GM12878 (cell line): ENCODE measurements at regions of chr17 and their contacts with region 1.

Region 1: GRCh38 chr17:29116804-29117772 is 63.1 kb downstream of the MYO18A start:
- DNase-seq: peak; percentile 5
- ATAC-seq: peak; percentile 89
- H3K4me3 ChIP-seq: no peak overlapping the region
- H3K27ac ChIP-seq: no peak overlapping the region
- H3K4me1 ChIP-seq: no peaks in the 10 kb centered on the region
- H3K27me3 ChIP-seq: no peaks in the 10 kb centered on the region
- CTCF ChIP-seq: peak; percentile 90 to 95 (median 92)
- EP300 ChIP-seq: no peak
- POLR2A ChIP-seq: no peak
- RAD21 ChIP-seq: peak; percentile 70

Region 2: GRCh38 chr17:28960256-28961061 is 156.6 kb before region 1 on chr17:
- CTCF ChIA-PET with region 1: interaction called, 415 read pairs
- POLR2A ChIA-PET with region 1: interaction called, 5 read pairs
- RAD21 ChIA-PET with region 1: interaction called, 170 read pairs
- SMC1A ChIA-PET with region 1: interaction called, 68 read pairs
- in situ Hi-C with region 1: loop called (anchors 5 kb)
- intact Hi-C with region 1: loop called (anchors 1 kb)
- DNase-seq: no peak
- ATAC-seq: no peak
- H3K4me3 ChIP-seq: no peak overlapping the region
- H3K27ac ChIP-seq: no peak overlapping the region
- H3K4me1 ChIP-seq: no peaks in the 10 kb centered on the region
- H3K27me3 ChIP-seq: peaks cover 0 to 2% of the 10 kb centered on the region in 2 experiments; a peak in 1 of 4 replicates
- CTCF ChIP-seq: no peak
- EP300 ChIP-seq: no peak
- POLR2A ChIP-seq: no peak
- RAD21 ChIP-seq: no peak

Region 3: GRCh38 chr17:28973425-28973824 is 143.7 kb before region 1 on chr17:
- CTCF ChIA-PET with region 1: interaction called, 36 read pairs
- POLR2A ChIA-PET with region 1: no interaction called
- RAD21 ChIA-PET with region 1: interaction called, 3 read pairs
- SMC1A ChIA-PET with region 1: interaction called, 5 read pairs
- in situ Hi-C with region 1: loop called (anchors 5 kb)
- intact Hi-C with region 1: no loop called
- DNase-seq: no peak
- ATAC-seq: no peak
- H3K4me3 ChIP-seq: no peak overlapping the region
- H3K27ac ChIP-seq: no peak overlapping the region
- H3K4me1 ChIP-seq: no peaks in the 10 kb centered on the region
- H3K27me3 ChIP-seq: no peaks in the 10 kb centered on the region; a peak in 1 of 4 replicates
- CTCF ChIP-seq: no peak
- EP300 ChIP-seq: no peak
- POLR2A ChIP-seq: no peak
- RAD21 ChIP-seq: no peak

Region 4: GRCh38 chr17:29102741-29103181 is 14.3 kb before region 1 on chr17:
- CTCF ChIA-PET with region 1: interaction called, 24 read pairs
- POLR2A ChIA-PET with region 1: no interaction called
- RAD21 ChIA-PET with region 1: no interaction called
- SMC1A ChIA-PET with region 1: interaction called, 3 read pairs
- in situ Hi-C with region 1: no loop called
- intact Hi-C with region 1: no loop called
- DNase-seq: no peak
- ATAC-seq: no peak
- H3K4me3 ChIP-seq: no peak overlapping the region
- H3K27ac ChIP-seq: no peak overlapping the region
- H3K4me1 ChIP-seq: no peaks in the 10 kb centered on the region
- H3K27me3 ChIP-seq: no peaks in the 10 kb centered on the region
- CTCF ChIP-seq: no peak
- EP300 ChIP-seq: no peak
- POLR2A ChIP-seq: no peak
- RAD21 ChIP-seq: no peak

Region 5: DNA sequence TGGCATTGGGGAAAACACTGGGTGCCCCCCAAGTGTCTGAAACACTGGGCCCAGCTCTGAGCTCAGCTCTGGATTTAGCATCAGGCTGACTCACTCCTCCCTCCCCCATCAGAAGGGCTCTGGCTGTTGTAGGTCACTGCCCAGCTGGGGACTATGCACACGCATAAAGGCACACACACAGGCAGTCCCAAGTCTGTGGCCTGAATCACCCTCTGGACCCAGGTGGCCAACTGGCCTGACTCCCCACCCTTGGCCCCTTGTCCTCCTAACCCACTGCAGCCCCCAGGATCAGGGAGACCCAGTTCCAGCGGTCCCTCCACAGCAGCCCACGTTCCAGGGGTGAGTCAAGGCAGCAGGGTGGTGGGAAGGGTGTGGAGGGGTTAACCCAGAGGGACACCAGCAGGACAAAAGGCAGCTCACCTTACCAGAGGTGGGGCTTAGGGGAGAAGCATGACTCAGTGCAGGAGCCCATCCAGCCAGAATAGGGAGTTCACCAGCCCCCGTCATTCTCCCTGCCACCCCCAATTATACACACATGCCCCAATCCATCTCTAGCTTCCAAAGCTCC is 16.1 kb after region 1 on chr17:
- CTCF ChIA-PET with region 1: interaction called, 371 read pairs
- POLR2A ChIA-PET with region 1: no interaction called
- RAD21 ChIA-PET with region 1: interaction called, 4 read pairs
- SMC1A ChIA-PET with region 1: interaction called, 7 read pairs
- in situ Hi-C with region 1: no loop called
- intact Hi-C with region 1: no loop called
- DNase-seq: no peak
- ATAC-seq: peak; percentile 35; the same call in 1 of the 3 replicates
- H3K4me3 ChIP-seq: no peak overlapping the region
- H3K27ac ChIP-seq: no peak overlapping the region
- H3K4me1 ChIP-seq: peaks cover 7% of the 10 kb centered on the region
- H3K27me3 ChIP-seq: no peaks in the 10 kb centered on the region
- CTCF ChIP-seq: no peak
- EP300 ChIP-seq: no peak
- POLR2A ChIP-seq: no peak
- RAD21 ChIP-seq: no peak

Region 6: GRCh38 chr17:29140051-29140621 is 23.0 kb after region 1 on chr17:
- CTCF ChIA-PET with region 1: interaction called, 371 read pairs
- POLR2A ChIA-PET with region 1: no interaction called
- RAD21 ChIA-PET with region 1: interaction called, 7 read pairs
- SMC1A ChIA-PET with region 1: interaction called, 7 read pairs
- in situ Hi-C with region 1: no loop called
- intact Hi-C with region 1: no loop called
- DNase-seq: no peak
- ATAC-seq: peak; percentile 82
- H3K4me3 ChIP-seq: peak overlapping the region; percentile 81
- H3K27ac ChIP-seq: peak overlapping the region; percentile 76
- H3K4me1 ChIP-seq: peaks cover 31% of the 10 kb centered on the region
- H3K27me3 ChIP-seq: no peaks in the 10 kb centered on the region
- CTCF ChIP-seq: no peak
- EP300 ChIP-seq: no peak
- POLR2A ChIP-seq: peak; percentile 81
- RAD21 ChIP-seq: no peak